Naive thymus-derived CD4-positive, alpha-beta T cell (primary cell): ENCODE measurements at regions of chr10 and their contacts with region 1.

Region 1: DNA sequence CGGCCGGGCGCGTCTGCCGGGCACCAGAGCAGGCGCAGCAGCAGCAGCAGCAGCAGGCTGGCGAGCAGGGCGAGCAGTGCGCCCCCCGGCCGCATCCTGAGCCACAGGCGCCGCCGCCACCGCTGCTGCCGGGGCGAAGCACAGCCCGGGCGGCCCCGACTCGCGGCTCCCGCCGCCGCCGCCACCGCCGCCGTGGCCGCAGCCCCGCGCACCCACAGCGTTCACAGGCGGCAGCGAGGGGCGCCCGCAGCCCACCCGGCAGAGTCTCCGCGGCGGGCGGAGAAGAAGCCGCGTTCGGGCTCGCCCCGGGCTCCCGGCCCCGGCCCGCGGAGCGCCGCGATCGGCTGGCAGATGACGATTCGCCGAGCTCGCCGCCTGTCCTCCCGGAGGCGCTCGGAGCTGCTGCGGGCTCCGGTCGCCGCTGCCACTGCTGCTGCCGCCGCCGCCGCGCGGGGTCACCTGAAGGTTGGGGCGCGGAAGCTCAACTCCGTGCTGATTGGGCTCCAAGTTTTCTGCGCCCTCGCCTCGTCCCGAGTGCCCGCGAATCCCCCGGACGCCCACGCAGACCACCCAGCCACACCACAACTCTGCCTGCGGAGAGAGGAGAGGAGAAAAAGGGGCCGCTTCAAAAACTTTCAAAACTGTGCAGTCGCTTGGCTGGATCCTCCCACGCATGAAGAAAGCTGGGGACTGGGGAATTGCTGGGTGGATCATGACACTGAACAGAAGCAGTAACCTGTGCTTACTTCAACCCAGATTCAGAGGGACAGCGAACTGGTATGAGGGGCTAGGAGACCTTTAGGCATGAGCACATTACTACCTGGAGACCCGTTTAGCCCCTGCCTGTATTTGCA is at the start of gene ST8SIA6:
- DNase-seq: peak; percentile 26 to 64 (median 52)
- ATAC-seq: peak; percentile 80
- H3K4me3 ChIP-seq: peak within 1 kb of the TSS; percentile 64
- H3K4me3 Mint-ChIP-seq: peak within 1 kb of the TSS; percentile 82 to 92 (median 89)
- H3K27ac ChIP-seq: peak within 1 kb of the TSS; percentile 29
- H3K27ac Mint-ChIP-seq: peak within 1 kb of the TSS in 5 of 9 donors; percentile 18 to 87 (median 74)
- H3K4me1 ChIP-seq: peaks cover 4 to 10% of the 10 kb centered on the region in 2 donors
- H3K4me1 Mint-ChIP-seq: peaks cover 5 to 23% (median 20%) of the 10 kb centered on the region in 7 donors
- H3K27me3 ChIP-seq: no peaks in the 10 kb centered on the region
- H3K27me3 Mint-ChIP-seq: peaks cover 0 to 66% (median 5%) of the 10 kb centered on the region in 5 donors
- total RNA-seq, gene ST8SIA6: 0.43 to 2.5 (median 0.60) TPM

Region 2: GRCh38 chr10:17504547-17505245 is 50.3 kb after region 1 on chr10:
- CTCF ChIA-PET with region 1: no interaction called
- POLR2A ChIA-PET with region 1: no interaction called
- intact Hi-C with region 1: loop called in 1 of 2 experiments (anchors 2 kb)
- DNase-seq: no peak
- ATAC-seq: no peak
- H3K4me3 ChIP-seq: no peak overlapping the region
- H3K4me3 Mint-ChIP-seq: peak overlapping the region in 6 of 10 donors; percentile 9 to 53 (median 40)
- H3K27ac ChIP-seq: no peak overlapping the region
- H3K27ac Mint-ChIP-seq: peak overlapping the region in 8 of 9 donors; percentile 10 to 84 (median 46)
- H3K4me1 ChIP-seq: peaks cover 15 to 17% of the 10 kb centered on the region in 2 donors
- H3K4me1 Mint-ChIP-seq: peaks cover 23 to 50% (median 33%) of the 10 kb centered on the region in 7 donors
- H3K27me3 ChIP-seq: no peaks in the 10 kb centered on the region
- H3K27me3 Mint-ChIP-seq: peaks cover 0 to 10% (median 0%) of the 10 kb centered on the region in 5 donors